CD14-positive monocyte (primary cell): ENCODE measurements at regions of chr20 and their contacts with region 1.

Region 1: DNA sequence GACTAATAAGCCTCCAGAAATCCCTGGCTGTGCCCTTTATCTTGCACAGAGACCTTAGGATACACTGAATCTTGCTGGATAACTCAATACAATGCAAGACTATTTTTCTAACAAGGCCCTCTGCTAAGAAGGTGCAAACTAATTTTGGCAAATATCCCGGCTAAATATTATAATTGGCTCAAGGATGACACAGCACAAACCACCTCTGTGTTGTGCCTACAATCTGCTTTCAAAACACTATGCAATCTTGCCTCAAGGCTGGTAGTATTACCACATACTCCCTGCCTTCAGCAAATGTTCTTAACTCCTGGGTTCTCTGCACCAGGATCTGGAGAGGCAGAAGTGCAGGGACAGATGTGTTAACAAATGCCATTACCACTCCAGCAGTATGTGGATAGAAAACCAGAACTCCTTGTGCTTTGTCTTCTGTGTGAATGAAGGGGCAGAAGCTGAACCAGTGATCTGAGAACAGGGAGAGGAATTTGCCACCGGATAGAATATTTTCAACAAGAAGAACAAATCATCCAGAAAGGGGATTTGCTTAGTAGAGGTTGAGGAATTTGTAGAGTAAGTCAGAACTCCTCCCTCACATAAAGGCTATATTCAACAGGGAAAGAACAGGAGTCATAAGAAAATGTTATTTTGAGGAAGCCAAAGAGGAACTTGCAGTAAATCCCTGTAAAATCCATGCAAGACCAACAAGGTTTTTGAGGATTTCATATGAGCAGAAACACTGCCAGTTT is 74.1 kb upstream of the SLC4A11 start:
- DNase-seq: peak; percentile 28 to 50 (median 39)
- H3K4me3 ChIP-seq: peak overlapping the region in 1 of 3 experiments; percentile 10
- H3K4me3 Mint-ChIP-seq: peak overlapping the region in 1 of 2 donors; percentile 56
- H3K27ac ChIP-seq: peak overlapping the region in 1 of 2 donors; percentile 71
- H3K27ac Mint-ChIP-seq: peak overlapping the region; percentile 75 to 91 (median 86)
- H3K4me1 ChIP-seq: peaks cover 30 to 31% of the 10 kb centered on the region in 2 donors
- H3K4me1 Mint-ChIP-seq: peaks cover 43% of the 10 kb centered on the region
- H3K27me3 ChIP-seq: no peaks in the 10 kb centered on the region
- H3K27me3 Mint-ChIP-seq: no peaks in the 10 kb centered on the region
- CTCF ChIP-seq: no peak

Region 2: DNA sequence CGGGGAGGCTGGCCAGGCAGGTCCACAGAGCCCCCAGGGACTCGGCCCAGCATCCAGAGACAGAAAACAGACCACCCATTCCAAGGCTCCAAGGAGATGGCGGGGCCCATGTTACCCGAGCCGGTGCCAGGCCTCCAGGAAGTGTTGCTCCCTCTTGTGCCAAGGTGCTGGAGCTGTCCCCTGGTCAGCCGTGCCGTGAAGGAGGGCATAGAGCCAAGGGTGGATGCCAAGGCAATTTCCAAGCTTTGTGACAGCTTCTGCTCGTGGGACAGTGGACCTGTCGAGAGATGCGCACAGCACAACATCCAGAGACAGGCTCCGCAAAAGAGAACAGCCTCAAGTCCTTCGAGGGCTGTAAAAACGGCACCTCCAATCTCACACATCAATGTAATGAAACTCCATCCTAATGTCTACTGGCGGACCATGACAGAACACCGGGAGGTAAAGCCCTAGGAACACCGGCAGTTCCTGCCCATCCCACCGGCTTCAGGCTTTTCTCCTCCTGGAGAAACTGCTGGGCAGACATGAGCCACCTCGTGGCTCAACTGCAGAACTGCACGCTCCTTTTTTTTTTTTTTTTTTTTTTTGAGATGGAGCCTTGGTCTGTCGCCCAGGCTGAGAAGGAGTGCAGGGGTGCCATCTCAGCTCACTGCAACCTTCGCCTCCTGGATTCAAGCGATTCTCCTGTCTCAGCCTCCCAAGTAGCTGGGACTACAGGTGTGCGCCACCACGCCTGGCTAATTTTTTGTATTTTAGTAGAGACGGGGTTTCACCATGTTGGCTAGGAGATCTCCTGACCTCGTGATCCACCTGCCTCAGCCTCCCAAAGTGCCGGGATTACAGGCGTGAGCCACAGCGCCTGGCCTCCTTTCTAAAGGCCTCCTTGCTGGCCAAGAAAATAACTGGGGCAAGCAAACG is 197.7 kb before region 1 on chr20:
- intact Hi-C with region 1: loop called in 1 of 2 experiments (anchors 5 kb)
- DNase-seq: peak; percentile 16 to 47 (median 41)
- H3K4me3 ChIP-seq: no peak overlapping the region
- H3K4me3 Mint-ChIP-seq: no peak overlapping the region
- H3K27ac ChIP-seq: no peak overlapping the region
- H3K27ac Mint-ChIP-seq: no peak overlapping the region
- H3K4me1 ChIP-seq: peaks cover 10 to 12% of the 10 kb centered on the region in 2 donors
- H3K4me1 Mint-ChIP-seq: peaks cover 24% of the 10 kb centered on the region
- H3K27me3 ChIP-seq: no peaks in the 10 kb centered on the region
- H3K27me3 Mint-ChIP-seq: peaks cover 0 to 2% (median 0%) of the 10 kb centered on the region in 3 donors
- CTCF ChIP-seq: peak; percentile 93

Region 3: GRCh38 chr20:3218307-3218988 is 94.7 kb before region 1 on chr20:
- intact Hi-C with region 1: loop called (anchors 5 to 10 kb)
- DNase-seq: peak; percentile 27 to 51 (median 39)
- H3K4me3 ChIP-seq: no peak overlapping the region
- H3K4me3 Mint-ChIP-seq: no peak overlapping the region
- H3K27ac ChIP-seq: no peak overlapping the region
- H3K27ac Mint-ChIP-seq: no peak overlapping the region
- H3K4me1 ChIP-seq: peaks cover 5 to 12% of the 10 kb centered on the region in 2 donors
- H3K4me1 Mint-ChIP-seq: peaks cover 7% of the 10 kb centered on the region
- H3K27me3 ChIP-seq: no peaks in the 10 kb centered on the region
- H3K27me3 Mint-ChIP-seq: peaks cover 0 to 1% (median 0%) of the 10 kb centered on the region in 3 donors
- CTCF ChIP-seq: peak; percentile 97